ENCODE measurements at regions of chr3 and their contacts with region 1.

Region 1: DNA sequence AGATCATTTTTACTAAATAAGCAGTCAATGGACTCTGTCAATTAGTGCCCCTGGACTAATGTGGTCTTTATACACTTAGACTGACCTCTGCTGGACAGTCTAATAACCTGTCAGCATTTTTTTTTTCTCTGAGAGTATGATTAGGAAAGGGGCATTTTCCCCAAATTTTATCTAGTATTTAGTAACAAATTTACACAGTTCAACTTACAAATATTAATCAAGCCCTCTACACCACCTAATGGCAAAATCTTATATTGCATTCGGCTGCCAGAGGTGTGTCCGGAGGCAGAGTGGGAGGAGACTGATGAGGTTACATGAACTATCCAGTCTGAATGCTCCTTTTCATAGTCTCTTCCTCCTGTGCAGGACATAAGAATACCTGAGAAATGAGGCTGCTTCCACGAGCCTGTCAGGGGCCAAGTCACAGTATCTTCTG is 36.0 kb upstream of the COLQ start:
- DNase-seq: peak; percentile 41
- H3K4me3 ChIP-seq: no peak overlapping the region
- CTCF ChIP-seq: peak; percentile 39

Region 2: DNA sequence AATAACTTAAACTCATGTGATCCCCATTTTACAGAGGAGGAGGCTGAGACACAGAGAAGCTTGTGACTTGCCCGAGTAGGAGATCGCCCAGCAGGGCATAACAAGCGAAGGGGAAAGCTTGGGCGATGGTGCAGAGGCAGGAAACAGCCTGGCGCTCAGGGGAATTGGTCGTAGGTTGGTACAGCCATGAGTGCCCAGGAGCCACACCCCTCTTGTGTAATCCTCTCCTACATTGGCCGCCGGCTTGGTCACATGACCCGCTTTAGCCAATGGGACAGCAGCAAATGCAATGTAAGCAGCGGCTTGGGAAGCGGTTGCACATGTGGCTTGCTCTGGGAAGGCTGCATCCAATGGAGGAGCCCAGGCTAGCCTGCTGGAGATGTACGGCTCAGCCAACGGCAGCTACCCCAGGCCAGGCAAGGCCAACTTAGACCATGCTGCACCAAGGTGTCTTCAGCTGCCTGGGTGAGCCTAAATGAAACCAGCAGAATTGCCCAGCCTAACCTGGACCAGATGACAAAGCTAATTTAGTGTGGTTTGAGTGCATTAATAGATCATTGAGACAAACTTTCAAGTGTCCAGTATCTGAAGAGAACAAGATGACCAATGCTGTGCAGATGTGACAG is 1205.4 kb before region 1 on chr3:
- CTCF ChIA-PET with region 1: no interaction called
- POLR2A ChIA-PET with region 1: no interaction called
- DNase-seq: no peak
- H3K4me3 ChIP-seq: no peak overlapping the region
- CTCF ChIP-seq: no peak

Region 3: GRCh38 chr3:15108082-15108545 is 449.4 kb before region 1 on chr3:
- CTCF ChIA-PET with region 1: interaction called, 20 read pairs
- POLR2A ChIA-PET with region 1: no interaction called
- DNase-seq: no peak
- H3K4me3 ChIP-seq: no peak overlapping the region
- CTCF ChIP-seq: peak; percentile 86

Region 4: DNA sequence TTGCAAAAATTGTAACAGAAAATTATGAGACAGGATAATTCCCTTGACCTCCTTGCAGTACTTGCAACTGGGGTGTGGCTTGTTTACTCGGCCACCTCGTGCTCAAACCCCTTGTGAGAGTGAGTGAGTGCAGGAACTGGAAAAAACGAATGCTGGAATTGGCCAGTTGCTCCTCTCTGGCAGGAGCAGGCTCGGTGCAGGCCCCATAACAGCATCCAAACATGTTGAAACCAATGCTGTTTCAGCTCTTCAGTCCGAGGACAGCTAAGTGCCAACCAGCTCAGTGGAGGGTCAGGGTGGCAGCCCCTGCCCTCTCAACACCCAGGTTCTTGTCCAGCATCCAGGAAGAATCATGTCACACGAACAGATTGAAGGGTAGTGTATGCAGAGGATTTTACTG is 167.1 kb before region 1 on chr3:
- CTCF ChIA-PET with region 1: no interaction called
- POLR2A ChIA-PET with region 1: no interaction called
- DNase-seq: no peak
- H3K4me3 ChIP-seq: no peak overlapping the region
- CTCF ChIP-seq: no peak

Region 5: GRCh38 chr3:15427182-15427880 is 130.2 kb before region 1 on chr3 and contains the starts of genes EAF1 and METTL6:
- CTCF ChIA-PET with region 1: interaction called, 12 read pairs
- POLR2A ChIA-PET with region 1: no interaction called
- DNase-seq: no peak
- H3K4me3 ChIP-seq: peak within 1 kb of the TSS; percentile 91
- CTCF ChIP-seq: peak; percentile 0

Region 6: GRCh38 chr3:15572138-15572537 is 14.6 kb after region 1 on chr3:
- CTCF ChIA-PET with region 1: interaction called, 11 read pairs
- POLR2A ChIA-PET with region 1: no interaction called
- DNase-seq: no peak
- H3K4me3 ChIP-seq: no peak overlapping the region
- CTCF ChIP-seq: no peak